ENCODE measurements at regions of chr6 and their contacts with region 1.

Region 1: GRCh38 chr6:55445648-55446204 is 118.5 kb downstream of the GFRAL start:
- DNase-seq: peak; percentile 45
- ATAC-seq: peak; percentile 65
- H3K4me3 ChIP-seq: no peak overlapping the region
- H3K27ac ChIP-seq: peak overlapping the region; percentile 83; the same call in 1 of the 2 replicates
- H3K4me1 ChIP-seq: peaks cover 12% of the 10 kb centered on the region
- H3K27me3 ChIP-seq: no peaks in the 10 kb centered on the region
- CTCF ChIP-seq: peak; percentile 72; the same call in 1 of the 2 replicates

Region 2: DNA sequence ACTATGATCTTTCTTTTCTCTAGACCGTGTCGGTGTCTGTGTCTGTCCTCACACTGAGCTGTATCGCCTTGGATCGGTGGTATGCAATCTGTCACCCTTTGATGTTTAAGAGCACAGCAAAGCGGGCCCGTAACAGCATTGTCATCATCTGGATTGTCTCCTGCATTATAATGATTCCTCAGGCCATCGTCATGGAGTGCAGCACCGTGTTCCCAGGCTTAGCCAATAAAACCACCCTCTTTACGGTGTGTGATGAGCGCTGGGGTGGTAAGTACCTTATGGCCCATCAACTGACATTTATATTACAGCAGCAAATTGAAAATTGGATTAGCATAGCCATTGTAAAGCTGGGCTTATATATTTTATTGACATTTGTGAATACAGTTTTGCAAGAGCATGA is 190.6 kb before region 1 on chr6:
- CTCF ChIA-PET with region 1: no interaction called
- POLR2A ChIA-PET with region 1: no interaction called
- in situ Hi-C with region 1: no loop called
- intact Hi-C with region 1: no loop called
- DNase-seq: no peak
- ATAC-seq: no peak
- H3K4me3 ChIP-seq: no peak overlapping the region
- H3K27ac ChIP-seq: no peak overlapping the region
- H3K4me1 ChIP-seq: no peaks in the 10 kb centered on the region
- H3K27me3 ChIP-seq: peaks cover 2% of the 10 kb centered on the region; the same call in 1 of the 2 replicates
- CTCF ChIP-seq: no peak

Region 3: GRCh38 chr6:55276745-55277530 is 168.8 kb before region 1 on chr6:
- CTCF ChIA-PET with region 1: interaction called, 6 read pairs
- POLR2A ChIA-PET with region 1: no interaction called
- in situ Hi-C with region 1: no loop called
- intact Hi-C with region 1: loop called (anchors 2 kb)
- DNase-seq: peak; percentile 42
- ATAC-seq: peak; percentile 85
- H3K4me3 ChIP-seq: no peak overlapping the region
- H3K27ac ChIP-seq: peak overlapping the region; percentile 74
- H3K4me1 ChIP-seq: peaks cover 13% of the 10 kb centered on the region
- H3K27me3 ChIP-seq: peaks cover 3% of the 10 kb centered on the region; the same call in 1 of the 2 replicates
- CTCF ChIP-seq: peak; percentile 76; the same call in 1 of the 2 replicates

Region 4: GRCh38 chr6:55299286-55299985 is 146.3 kb before region 1 on chr6:
- CTCF ChIA-PET with region 1: no interaction called
- POLR2A ChIA-PET with region 1: no interaction called
- in situ Hi-C with region 1: no loop called
- intact Hi-C with region 1: no loop called
- DNase-seq: no peak
- ATAC-seq: no peak
- H3K4me3 ChIP-seq: no peak overlapping the region
- H3K27ac ChIP-seq: no peak overlapping the region
- H3K4me1 ChIP-seq: no peaks in the 10 kb centered on the region
- H3K27me3 ChIP-seq: no peaks in the 10 kb centered on the region
- CTCF ChIP-seq: no peak

Region 5: GRCh38 chr6:55388211-55388610 is 57.5 kb before region 1 on chr6:
- CTCF ChIA-PET with region 1: no interaction called
- POLR2A ChIA-PET with region 1: no interaction called
- in situ Hi-C with region 1: no loop called
- intact Hi-C with region 1: no loop called
- DNase-seq: no peak
- ATAC-seq: no peak
- H3K4me3 ChIP-seq: no peak overlapping the region
- H3K27ac ChIP-seq: no peak overlapping the region
- H3K4me1 ChIP-seq: no peaks in the 10 kb centered on the region
- H3K27me3 ChIP-seq: 0 out of 2 replicates have a peak, but pooled peaks cover 2% of the 10 kb centered on the region
- CTCF ChIP-seq: no peak

Region 6: DNA sequence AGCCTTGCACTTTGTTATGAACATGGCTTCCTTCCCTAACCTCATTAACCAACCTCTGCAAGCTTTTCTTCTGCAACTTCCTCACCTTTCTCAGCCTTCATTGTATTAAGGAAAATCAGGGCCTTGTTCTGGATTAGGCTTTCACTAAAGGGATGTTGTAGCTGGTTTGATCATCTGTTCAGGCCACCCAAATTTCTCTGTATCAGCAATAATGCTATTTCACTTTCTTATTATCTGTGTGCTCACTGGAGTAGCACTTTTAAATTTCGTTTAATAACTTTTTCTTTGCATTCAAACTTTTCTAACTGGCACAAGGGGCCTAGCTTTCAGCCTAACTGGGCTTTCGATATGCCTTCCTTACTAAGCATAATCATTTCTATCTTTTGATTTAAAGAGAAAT is 21.8 kb before region 1 on chr6:
- CTCF ChIA-PET with region 1: no interaction called
- POLR2A ChIA-PET with region 1: no interaction called
- in situ Hi-C with region 1: no loop called
- intact Hi-C with region 1: no loop called
- DNase-seq: no peak
- ATAC-seq: no peak
- H3K4me3 ChIP-seq: no peak overlapping the region
- H3K27ac ChIP-seq: no peak overlapping the region
- H3K4me1 ChIP-seq: no peaks in the 10 kb centered on the region
- H3K27me3 ChIP-seq: no peaks in the 10 kb centered on the region; the same call in 1 of the 2 replicates
- CTCF ChIP-seq: no peak

Region 7: GRCh38 chr6:55694148-55694547 is 248.4 kb after region 1 on chr6:
- CTCF ChIA-PET with region 1: no interaction called
- POLR2A ChIA-PET with region 1: no interaction called
- in situ Hi-C with region 1: no loop called
- intact Hi-C with region 1: loop called (anchors 10 kb)
- DNase-seq: no peak
- ATAC-seq: 0 out of 2 replicates have a peak, but pooled peaks have one; percentile 48
- H3K4me3 ChIP-seq: no peak overlapping the region
- H3K27ac ChIP-seq: peak overlapping the region; percentile 51; the same call in 1 of the 2 replicates
- H3K4me1 ChIP-seq: peaks cover 6% of the 10 kb centered on the region; the same call in 1 of the 2 replicates
- H3K27me3 ChIP-seq: no peaks in the 10 kb centered on the region
- CTCF ChIP-seq: no peak

Region 8: GRCh38 chr6:55953335-55953734 is 507.6 kb after region 1 on chr6:
- CTCF ChIA-PET with region 1: interaction called, 5 read pairs
- POLR2A ChIA-PET with region 1: no interaction called
- in situ Hi-C with region 1: no loop called
- intact Hi-C with region 1: loop called (anchors 2 kb)
- DNase-seq: peak; percentile 57
- ATAC-seq: peak; percentile 96
- H3K4me3 ChIP-seq: peak overlapping the region; percentile 19 to 31
- H3K27ac ChIP-seq: peak overlapping the region; percentile 82
- H3K4me1 ChIP-seq: peaks cover 6% of the 10 kb centered on the region
- H3K27me3 ChIP-seq: no peaks in the 10 kb centered on the region
- CTCF ChIP-seq: peak; percentile 67; the same call in 1 of the 2 replicates

Region 9: GRCh38 chr6:56292505-56293181 is 846.9 kb after region 1 on chr6:
- CTCF ChIA-PET with region 1: no interaction called
- POLR2A ChIA-PET with region 1: no interaction called
- in situ Hi-C with region 1: no loop called
- intact Hi-C with region 1: loop called (anchors 10 kb)
- DNase-seq: peak; percentile 72
- ATAC-seq: peak; percentile 90
- H3K4me3 ChIP-seq: no peak overlapping the region
- H3K27ac ChIP-seq: peak overlapping the region; percentile 59; the same call in 1 of the 2 replicates
- H3K4me1 ChIP-seq: peaks cover 8% of the 10 kb centered on the region; the same call in 1 of the 2 replicates
- H3K27me3 ChIP-seq: no peaks in the 10 kb centered on the region
- CTCF ChIP-seq: peak; percentile 77